Activated CD4-positive, alpha-beta T cell treated with anti-CD3 and anti-CD28 coated beads for 36 hours (primary cell): ENCODE measurements at regions of chr16 and their contacts with region 1.

Region 1: DNA sequence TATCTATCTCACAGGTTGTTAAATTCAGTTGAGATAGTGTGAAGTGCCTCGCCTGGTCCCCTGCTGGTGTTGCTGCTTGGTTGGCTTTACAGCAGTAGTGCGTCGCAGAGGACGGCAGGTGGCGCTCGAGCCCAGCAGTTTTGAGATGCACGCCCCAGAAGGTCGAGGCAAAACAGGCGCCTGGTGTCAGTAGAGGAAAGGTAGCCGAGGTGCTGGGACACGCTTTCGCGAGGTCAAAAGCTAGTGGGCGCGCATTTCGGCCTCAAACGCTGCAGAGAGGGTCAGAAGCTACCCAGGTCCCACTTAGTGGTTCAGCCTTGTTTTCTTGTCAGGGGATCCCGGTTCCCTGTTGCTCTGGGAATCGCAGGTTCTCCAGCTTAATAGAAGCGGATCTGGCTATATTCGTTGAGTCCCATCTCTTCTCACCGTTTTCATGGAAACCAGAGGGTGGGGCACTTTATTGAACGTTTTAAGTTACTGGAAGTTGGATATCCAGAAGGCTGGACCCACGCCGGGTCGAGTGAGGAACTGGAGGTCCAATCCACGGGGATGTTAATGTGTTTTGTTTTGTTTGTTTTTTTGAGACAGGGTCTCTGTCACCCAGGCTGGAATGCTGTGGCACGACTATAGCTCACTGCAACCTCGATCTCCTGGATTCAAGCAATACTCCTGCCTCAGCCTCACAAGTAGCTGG is 10.3 kb upstream of the ZFP90 start:
- DNase-seq: peak; percentile 94
- ATAC-seq: peak; percentile 85
- H3K4me3 Mint-ChIP-seq: peak overlapping the region; percentile 55
- H3K27ac Mint-ChIP-seq: no peak overlapping the region
- H3K4me1 Mint-ChIP-seq: peaks cover 13% of the 10 kb centered on the region
- H3K27me3 Mint-ChIP-seq: no peaks in the 10 kb centered on the region

Region 2: DNA sequence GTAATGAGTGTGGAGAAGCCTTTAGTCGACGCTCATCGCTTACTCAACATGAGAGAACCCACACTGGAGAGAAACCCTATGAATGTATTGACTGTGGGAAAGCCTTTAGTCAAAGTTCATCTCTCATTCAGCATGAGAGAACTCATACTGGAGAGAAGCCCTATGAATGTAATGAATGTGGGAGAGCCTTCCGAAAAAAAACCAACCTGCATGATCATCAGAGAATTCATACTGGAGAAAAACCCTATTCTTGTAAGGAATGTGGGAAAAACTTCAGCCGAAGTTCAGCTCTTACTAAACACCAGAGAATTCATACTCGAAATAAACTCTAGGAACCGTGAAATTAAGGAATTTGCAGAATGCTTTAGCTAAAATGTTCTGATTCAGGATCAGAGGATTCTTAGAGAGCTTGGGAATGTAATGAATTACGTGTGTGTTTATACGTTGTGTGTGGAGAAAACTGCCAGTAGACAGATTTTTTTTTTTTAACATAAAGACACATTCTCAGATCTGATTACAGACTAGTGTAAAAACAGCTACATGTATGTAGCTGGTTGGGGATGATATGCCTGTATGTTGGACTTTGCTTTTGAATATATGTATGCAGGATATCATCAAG is 35.6 kb after region 1 on chr16:
- CTCF ChIA-PET with region 1: interaction called, 10 read pairs
- POLR2A ChIA-PET with region 1: no interaction called
- intact Hi-C with region 1: no loop called
- DNase-seq: no peak
- ATAC-seq: no peak
- H3K4me3 Mint-ChIP-seq: no peak overlapping the region
- H3K27ac Mint-ChIP-seq: no peak overlapping the region
- H3K4me1 Mint-ChIP-seq: no peaks in the 10 kb centered on the region
- H3K27me3 Mint-ChIP-seq: no peaks in the 10 kb centered on the region

Region 3: DNA sequence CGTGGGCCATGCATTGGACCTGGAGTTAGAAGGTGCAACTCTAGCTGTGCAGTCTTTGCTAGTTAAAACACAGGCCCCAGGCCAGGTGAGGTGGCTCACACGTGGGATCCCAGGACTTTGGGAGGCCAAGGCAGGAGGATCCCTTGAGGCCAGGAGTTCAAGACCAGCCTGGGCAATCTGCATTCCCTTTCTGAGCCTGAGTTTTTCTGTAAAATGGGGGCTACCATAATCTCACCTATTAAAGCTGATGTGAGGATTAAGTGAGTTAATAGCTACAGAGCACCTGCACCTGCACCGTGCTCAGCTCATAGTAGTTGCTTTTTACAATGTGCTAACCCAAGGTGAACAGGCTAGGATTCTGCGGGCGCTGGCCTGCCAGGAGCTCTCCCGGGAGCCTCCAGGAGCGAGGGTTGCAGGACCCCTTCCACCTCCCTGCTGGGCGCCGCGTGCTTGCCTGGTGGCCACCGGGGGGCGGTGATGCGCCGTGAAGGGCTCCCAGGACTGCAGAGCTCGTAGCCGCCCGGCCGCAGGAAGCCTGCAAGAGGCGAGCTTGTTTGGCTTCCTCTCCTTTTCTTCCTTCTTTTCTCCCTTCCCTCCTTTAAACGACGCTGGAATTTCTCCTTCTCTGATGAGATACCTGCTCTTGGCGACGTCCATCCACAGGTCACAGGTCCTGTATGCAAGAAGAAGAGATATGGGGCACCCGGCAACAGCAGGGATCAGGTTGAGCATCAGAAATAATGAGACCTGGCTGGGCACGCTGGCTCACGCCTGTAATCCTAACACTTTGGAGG is 61.6 kb after region 1 on chr16:
- CTCF ChIA-PET with region 1: interaction called, 26 read pairs
- POLR2A ChIA-PET with region 1: no interaction called
- intact Hi-C with region 1: loop called (anchors 2 to 5 kb)
- DNase-seq: peak; percentile 89
- ATAC-seq: peak; percentile 99
- H3K4me3 Mint-ChIP-seq: no peak overlapping the region
- H3K27ac Mint-ChIP-seq: no peak overlapping the region
- H3K4me1 Mint-ChIP-seq: peaks cover 2% of the 10 kb centered on the region
- H3K27me3 Mint-ChIP-seq: no peaks in the 10 kb centered on the region

Region 4: GRCh38 chr16:68704232-68704867 is 175.5 kb after region 1 on chr16:
- CTCF ChIA-PET with region 1: interaction called, 3 read pairs
- POLR2A ChIA-PET with region 1: no interaction called
- intact Hi-C with region 1: loop called in 1 of 2 experiments (anchors 2 kb)
- DNase-seq: peak; percentile 83
- ATAC-seq: peak; percentile 91
- H3K4me3 Mint-ChIP-seq: no peak overlapping the region
- H3K27ac Mint-ChIP-seq: peak overlapping the region; percentile 39
- H3K4me1 Mint-ChIP-seq: peaks cover 5% of the 10 kb centered on the region
- H3K27me3 Mint-ChIP-seq: peaks cover 3% of the 10 kb centered on the region

Region 5: DNA sequence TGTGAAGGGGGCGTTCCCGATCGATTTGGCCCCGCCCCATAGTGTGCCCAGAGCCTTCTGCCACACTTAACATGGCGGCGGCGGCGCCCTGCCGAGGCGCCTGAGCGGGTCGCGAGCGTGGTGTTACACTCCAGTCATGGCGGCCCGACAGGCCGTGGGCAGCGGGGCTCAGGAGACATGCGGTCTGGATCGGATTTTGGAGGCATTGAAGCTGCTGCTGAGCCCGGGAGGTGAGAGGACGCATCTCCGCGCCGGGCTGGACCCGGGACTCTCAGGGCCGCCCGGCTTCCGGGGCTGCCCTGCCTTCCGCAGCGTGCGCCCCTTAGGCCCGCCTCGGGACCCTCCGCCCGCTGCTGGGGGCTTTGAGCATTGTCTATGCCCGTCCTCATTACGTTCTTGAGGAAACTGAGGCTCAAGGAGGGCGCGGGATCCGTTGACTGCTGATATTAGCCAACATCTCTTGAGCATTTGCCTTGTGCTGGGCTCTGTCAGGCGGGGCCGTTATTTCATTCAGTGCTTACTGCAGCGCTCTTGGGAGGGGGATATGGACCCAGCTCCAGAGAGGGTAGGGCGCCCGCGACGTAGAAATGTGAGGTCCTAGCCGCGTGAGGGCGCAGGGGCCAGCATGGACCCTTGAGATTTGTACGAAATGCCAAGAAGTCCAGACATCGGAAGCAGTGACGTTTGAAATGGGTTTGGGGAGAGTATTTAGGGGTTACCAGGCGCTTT is 314.8 kb after region 1 on chr16 and contains the start of gene TANGO6:
- CTCF ChIA-PET with region 1: interaction called, 6 read pairs
- POLR2A ChIA-PET with region 1: no interaction called
- intact Hi-C with region 1: loop called (anchors 1 to 2 kb)
- DNase-seq: peak; percentile 95
- ATAC-seq: peak; percentile 93
- H3K4me3 Mint-ChIP-seq: peak within 1 kb of the TSS; percentile 84
- H3K27ac Mint-ChIP-seq: peak within 1 kb of the TSS; percentile 91
- H3K4me1 Mint-ChIP-seq: peaks cover 27% of the 10 kb centered on the region
- H3K27me3 Mint-ChIP-seq: no peaks in the 10 kb centered on the region
- total RNA-seq, gene TANGO6: 29.7 to 31.2 TPM

Region 6: DNA sequence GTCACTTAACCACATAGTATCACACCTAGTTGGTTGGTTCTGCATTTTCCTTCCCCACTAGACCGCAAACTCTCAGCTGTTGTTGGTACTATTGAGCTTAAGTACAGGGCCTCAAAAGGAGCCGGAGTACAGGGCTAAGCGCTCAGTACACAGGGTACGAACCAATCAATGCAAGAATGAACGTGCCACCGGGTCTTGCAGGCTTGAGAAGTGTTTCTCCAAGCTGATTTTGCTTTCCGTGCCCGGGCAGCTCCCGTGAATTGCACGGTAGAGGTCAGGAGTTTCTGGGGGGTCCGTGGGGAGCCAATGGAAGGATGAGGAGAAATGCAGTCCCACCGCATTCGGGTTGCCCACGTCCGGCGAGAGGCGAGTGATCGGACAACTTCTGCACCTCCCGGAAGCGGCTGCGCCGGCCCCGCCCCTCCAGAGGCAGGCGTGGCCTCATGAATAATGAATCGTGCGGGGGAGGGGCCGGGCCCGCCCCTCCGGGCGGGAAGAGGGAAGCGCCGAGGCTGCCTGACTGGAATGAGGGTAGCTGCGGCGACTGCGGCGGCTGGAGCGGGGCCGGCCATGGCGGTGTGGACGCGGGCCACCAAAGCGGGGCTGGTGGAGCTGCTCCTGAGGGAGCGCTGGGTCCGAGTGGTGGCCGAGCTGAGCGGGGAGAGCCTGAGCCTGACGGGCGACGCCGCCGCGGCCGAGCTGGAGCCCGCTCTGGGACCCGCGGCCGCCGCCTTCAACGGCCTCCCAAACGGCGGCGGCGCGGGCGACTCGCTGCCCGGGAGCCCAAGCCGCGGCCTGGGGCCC is 658.0 kb after region 1 on chr16 and contains the start of gene SNTB2:
- CTCF ChIA-PET with region 1: no interaction called
- POLR2A ChIA-PET with region 1: no interaction called
- intact Hi-C with region 1: loop called in 1 of 2 experiments (anchors 2 kb)
- DNase-seq: peak; percentile 91
- ATAC-seq: peak; percentile 83
- H3K4me3 Mint-ChIP-seq: peak within 1 kb of the TSS; percentile 83
- H3K27ac Mint-ChIP-seq: peak within 1 kb of the TSS; percentile 96
- H3K4me1 Mint-ChIP-seq: peaks cover 50% of the 10 kb centered on the region
- H3K27me3 Mint-ChIP-seq: no peaks in the 10 kb centered on the region
- total RNA-seq, gene SNTB2: 15.7 to 17.2 TPM